ENCODE measurements at regions of chr2 and their contacts with region 1.

Region 1: GRCh38 chr2:152627351-152627957 is 89.8 kb downstream of the PRPF40A start:
- DNase-seq: peak; percentile 27
- CTCF ChIP-seq: peak; percentile 59

Region 2: DNA sequence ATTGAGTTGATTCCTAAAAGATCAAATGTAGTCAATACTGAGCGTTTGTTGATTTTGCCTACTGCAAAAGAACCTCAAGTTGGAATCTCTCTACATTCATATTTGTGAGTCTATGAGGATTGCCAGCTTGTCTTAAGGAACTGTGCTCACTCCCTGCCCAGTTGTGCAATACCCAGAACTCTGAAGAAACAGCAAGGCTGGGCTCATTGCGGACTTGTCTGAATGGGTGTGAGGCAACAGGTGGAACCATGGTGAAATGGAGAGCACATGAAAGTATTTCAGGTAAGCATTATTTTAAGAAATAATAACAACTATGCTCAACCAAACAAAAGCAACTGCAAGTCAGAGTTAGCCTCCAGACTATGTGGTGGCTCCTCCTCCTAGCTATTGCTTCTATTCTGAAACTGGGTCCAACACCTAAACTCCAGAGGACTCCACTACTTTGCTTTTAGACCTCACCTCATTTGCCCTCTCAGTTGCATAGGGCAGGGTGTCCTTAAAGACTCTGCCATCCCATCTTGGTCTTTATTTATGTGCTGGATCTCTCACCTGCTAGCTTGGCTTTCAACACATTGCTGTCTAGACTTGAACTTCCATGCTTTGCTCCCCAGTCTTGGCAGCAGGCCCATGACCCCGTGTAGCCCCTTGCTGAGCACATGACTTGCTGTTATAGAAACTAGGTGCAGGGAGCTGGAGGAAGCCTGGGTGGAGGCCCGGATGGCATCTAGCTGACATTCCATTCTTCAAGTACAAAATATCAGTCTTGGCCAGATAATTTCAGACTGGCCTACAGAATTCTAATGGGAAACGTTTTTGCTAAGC is 704.4 kb before region 1 on chr2:
- CTCF ChIA-PET with region 1: no interaction called
- POLR2A ChIA-PET with region 1: no interaction called
- DNase-seq: no peak
- CTCF ChIP-seq: no peak

Region 3: DNA sequence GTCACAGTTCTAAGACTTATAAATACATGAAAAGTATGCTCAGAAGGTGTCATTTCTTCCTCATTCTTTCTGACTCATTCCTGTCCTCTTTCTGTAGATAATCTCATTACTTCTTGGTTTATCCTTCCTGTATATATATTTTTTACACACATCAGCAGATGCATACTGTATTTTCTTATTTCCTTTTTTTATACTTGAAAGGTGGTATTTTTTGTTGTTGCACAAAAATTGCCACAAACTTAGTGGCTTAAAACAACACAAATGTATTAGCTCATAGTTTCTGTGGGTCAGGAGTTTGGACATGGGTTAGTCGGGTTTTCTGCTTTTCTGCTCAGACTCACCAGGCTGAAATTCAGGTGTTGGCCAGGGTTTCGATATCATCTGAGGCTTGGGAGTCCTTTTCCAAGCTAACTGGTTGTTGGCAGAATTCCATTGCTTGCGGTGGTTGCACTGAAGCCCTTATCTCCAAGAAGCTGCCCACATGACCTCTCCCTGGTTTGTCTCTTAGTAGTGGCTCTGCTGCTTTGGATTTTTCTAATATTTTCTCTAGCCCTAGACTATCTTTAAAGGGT is 129.9 kb before region 1 on chr2:
- CTCF ChIA-PET with region 1: no interaction called
- POLR2A ChIA-PET with region 1: no interaction called
- DNase-seq: peak; percentile 20
- CTCF ChIP-seq: no peak

Region 4: GRCh38 chr2:152600698-152601097 is 26.8 kb before region 1 on chr2:
- CTCF ChIA-PET with region 1: no interaction called
- POLR2A ChIA-PET with region 1: no interaction called
- DNase-seq: no peak
- CTCF ChIP-seq: no peak

Region 5: GRCh38 chr2:152611458-152612231 is 15.8 kb before region 1 on chr2:
- CTCF ChIA-PET with region 1: interaction called, 27 read pairs
- POLR2A ChIA-PET with region 1: no interaction called
- DNase-seq: peak; percentile 57
- CTCF ChIP-seq: no peak

Region 6: GRCh38 chr2:153222231-153223165 is 595.0 kb after region 1 on chr2:
- CTCF ChIA-PET with region 1: no interaction called
- POLR2A ChIA-PET with region 1: no interaction called
- DNase-seq: no peak
- CTCF ChIP-seq: no peak